ENCODE measurements at regions of chr13 and their contacts with region 1.

Region 1: GRCh38 chr13:48975856-48976575 is at the start of gene FNDC3A:
- DNase-seq: peak; percentile 95
- H3K4me3 ChIP-seq: peak within 1 kb of the TSS; percentile 84 to 91 (median 88)
- H3K27ac ChIP-seq: peak within 1 kb of the TSS; percentile 97 to 99 (median 99)
- H3K4me1 ChIP-seq: peaks cover 13 to 47% (median 42%) of the 10 kb centered on the region in 4 donors
- H3K27me3 ChIP-seq: no peaks in the 10 kb centered on the region
- CTCF ChIP-seq: peak in 1 of 3 experiments; percentile 8
- EP300 ChIP-seq: no peak
- POLR2A ChIP-seq: peak; percentile 10
- total RNA-seq, gene FNDC3A: 37.0 to 39.4 (median 38.6) TPM

Region 2: GRCh38 chr13:48853728-48854102 is 122.3 kb before region 1 on chr13:
- intact Hi-C with region 1: no loop called
- DNase-seq: peak; percentile 37
- H3K4me3 ChIP-seq: no peak overlapping the region
- H3K27ac ChIP-seq: no peak overlapping the region
- H3K4me1 ChIP-seq: no peaks in the 10 kb centered on the region
- H3K27me3 ChIP-seq: no peaks in the 10 kb centered on the region
- CTCF ChIP-seq: no peak
- EP300 ChIP-seq: no peak
- POLR2A ChIP-seq: no peak

Region 3: GRCh38 chr13:49098771-49099512 is 122.9 kb after region 1 on chr13:
- intact Hi-C with region 1: loop called (anchors 5 kb)
- DNase-seq: no peak
- H3K4me3 ChIP-seq: no peak overlapping the region
- H3K27ac ChIP-seq: peak overlapping the region; percentile 35 to 75 (median 74)
- H3K4me1 ChIP-seq: peaks cover 24 to 30% (median 25%) of the 10 kb centered on the region in 4 donors
- H3K27me3 ChIP-seq: no peaks in the 10 kb centered on the region
- CTCF ChIP-seq: peak; percentile 24 to 37 (median 29)
- EP300 ChIP-seq: no peak
- POLR2A ChIP-seq: no peak

Region 4: DNA sequence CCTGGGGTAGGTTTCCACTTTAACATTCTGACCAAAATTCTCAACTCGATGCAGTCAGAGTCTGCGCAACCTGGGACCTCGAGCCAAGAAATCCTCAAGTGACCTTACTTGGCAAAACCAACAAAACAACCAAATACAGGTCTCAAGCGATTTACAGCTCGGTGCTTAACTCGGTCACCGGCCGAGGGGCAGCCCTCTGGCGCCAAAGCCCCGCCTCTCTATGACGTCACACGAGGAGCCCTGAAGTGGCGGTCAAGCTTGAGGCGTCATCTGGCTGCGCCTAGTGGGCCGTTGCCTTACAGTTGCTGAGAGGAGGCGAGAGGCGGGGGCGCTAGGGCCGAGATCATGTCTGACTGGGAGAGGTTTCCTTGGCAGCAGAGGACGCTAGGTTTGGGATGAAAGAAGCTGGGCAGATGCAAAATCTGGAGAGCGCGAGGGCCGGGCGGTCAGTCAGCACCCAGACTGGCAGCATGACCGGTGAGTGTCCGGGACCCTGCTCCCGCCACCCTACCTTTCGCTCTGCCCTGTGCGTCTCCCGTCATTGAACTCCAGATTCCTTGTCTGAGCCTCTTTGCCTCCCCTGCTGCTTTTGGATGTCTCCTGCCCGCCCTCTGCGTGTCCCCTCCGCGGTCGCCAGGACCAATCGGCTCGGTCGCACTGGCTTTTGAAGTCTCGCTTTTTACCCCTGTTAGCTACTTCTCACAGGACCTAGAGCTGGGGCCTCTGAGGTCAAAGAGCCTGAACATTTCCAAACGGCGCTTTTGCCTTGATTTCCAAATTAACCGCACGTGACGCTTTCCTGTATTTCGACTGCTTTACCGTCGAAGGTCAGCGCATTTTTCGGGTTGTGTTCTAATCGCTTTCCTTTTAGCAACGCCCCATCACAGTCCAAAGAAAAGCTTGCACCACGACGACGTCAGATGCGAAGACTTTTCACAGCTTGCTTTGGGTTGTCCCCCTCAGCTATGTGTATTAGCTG is 271.9 kb after region 1 on chr13 and contains the start of gene CDADC1:
- intact Hi-C with region 1: loop called (anchors 10 kb)
- DNase-seq: peak; percentile 99
- H3K4me3 ChIP-seq: peak within 1 kb of the TSS; percentile 75 to 81 (median 79)
- H3K27ac ChIP-seq: peak within 1 kb of the TSS; percentile 90 to 94 (median 91)
- H3K4me1 ChIP-seq: peaks cover 18 to 42% (median 34%) of the 10 kb centered on the region in 4 donors
- H3K27me3 ChIP-seq: no peaks in the 10 kb centered on the region
- CTCF ChIP-seq: peak in 1 of 3 experiments; percentile 27
- EP300 ChIP-seq: no peak
- POLR2A ChIP-seq: peak; percentile 66
- total RNA-seq, gene CDADC1: 6.2 to 7.5 (median 6.5) TPM

Measured in esophagus muscularis mucosa (tissue), 4 donors.